B cell (primary cell): ENCODE measurements at regions of chr19 and their contacts with region 1.

Region 1: GRCh38 chr19:10565567-10566407 is at the start of gene KRI1:
- DNase-seq: peak; percentile 100
- ATAC-seq: peak; percentile 63
- H3K4me3 ChIP-seq: peak within 1 kb of the TSS; percentile 92 to 99 (median 97)
- H3K4me3 Mint-ChIP-seq: peak within 1 kb of the TSS; percentile 95
- H3K27ac ChIP-seq: peak within 1 kb of the TSS; percentile 87 to 88
- H3K27ac Mint-ChIP-seq: peak within 1 kb of the TSS; percentile 96
- H3K4me1 ChIP-seq: peaks cover 28 to 41% of the 10 kb centered on the region in 2 donors
- H3K4me1 Mint-ChIP-seq: peaks cover 44% of the 10 kb centered on the region
- H3K27me3 ChIP-seq: no peaks in the 10 kb centered on the region
- H3K27me3 Mint-ChIP-seq: no peaks in the 10 kb centered on the region
- CTCF ChIP-seq: peak; percentile 51
- total RNA-seq, gene KRI1: 62.8 and 67.9 TPM in 2 replicates

Region 2: GRCh38 chr19:10416380-10417257 is 149.2 kb before region 1 on chr19:
- CTCF ChIA-PET with region 1: no interaction called
- POLR2A ChIA-PET with region 1: interaction called, 3 read pairs
- intact Hi-C with region 1: loop called (anchors 5 kb)
- DNase-seq: peak; percentile 99
- ATAC-seq: peak; percentile 70
- H3K4me3 ChIP-seq: peak overlapping the region; percentile 15 to 69 (median 49)
- H3K4me3 Mint-ChIP-seq: peak overlapping the region; percentile 85
- H3K27ac ChIP-seq: peak overlapping the region in 1 of 2 donors; percentile 28
- H3K27ac Mint-ChIP-seq: peak overlapping the region; percentile 94
- H3K4me1 ChIP-seq: peaks cover 66 to 82% of the 10 kb centered on the region in 2 donors
- H3K4me1 Mint-ChIP-seq: peaks cover 59% of the 10 kb centered on the region
- H3K27me3 ChIP-seq: peaks cover 0 to 46% (median 28%) of the 10 kb centered on the region in 4 experiments
- H3K27me3 Mint-ChIP-seq: peaks cover 29% of the 10 kb centered on the region
- CTCF ChIP-seq: peak; percentile 100

Region 3: DNA sequence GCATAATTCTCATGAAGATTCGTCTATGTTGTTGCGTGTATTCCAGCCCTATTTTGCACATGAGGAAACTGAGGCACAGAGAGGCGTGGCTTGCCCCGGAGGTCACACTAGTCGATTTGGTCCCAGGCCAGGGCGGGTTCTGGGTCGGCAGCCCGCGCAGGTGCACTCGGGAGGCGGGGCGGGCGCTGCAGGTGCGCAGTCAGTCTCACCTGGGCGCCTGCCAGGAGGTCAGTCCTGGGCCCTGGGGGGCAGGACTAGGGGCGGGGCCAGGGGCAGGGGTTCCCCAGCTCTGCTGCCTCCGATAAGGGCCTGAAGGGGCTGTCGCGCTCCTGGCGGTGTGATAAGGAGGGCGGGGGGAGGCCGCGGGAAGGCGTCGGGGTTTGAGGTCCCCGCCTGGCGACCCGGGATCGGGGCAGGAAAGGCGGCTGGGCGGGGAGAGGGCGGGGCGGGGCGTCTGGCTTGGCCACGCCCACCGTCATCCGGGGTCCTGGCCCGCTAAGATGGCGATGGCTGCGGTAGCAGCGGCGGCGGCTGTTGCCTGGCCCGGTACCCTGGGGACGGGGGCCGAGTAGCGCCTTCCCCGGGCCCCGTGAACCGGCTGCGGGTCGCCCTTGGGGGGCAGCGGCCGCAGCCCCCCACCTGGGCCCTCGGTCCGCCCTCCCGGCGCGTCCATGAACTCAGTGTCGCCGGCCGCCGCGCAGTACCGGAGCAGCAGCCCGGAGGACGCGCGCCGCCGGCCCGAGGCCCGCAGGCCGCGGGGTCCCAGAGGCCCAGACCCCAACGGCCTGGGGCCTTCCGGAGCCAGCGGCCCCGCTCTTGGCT is 22.2 kb before region 1 on chr19 and contains the start of gene ATG4D:
- CTCF ChIA-PET with region 1: interaction called, 73 read pairs
- POLR2A ChIA-PET with region 1: interaction called, 15 read pairs
- intact Hi-C with region 1: loop called (anchors 1 kb)
- DNase-seq: peak; percentile 88
- ATAC-seq: peak; percentile 82
- H3K4me3 ChIP-seq: peak within 1 kb of the TSS; percentile 27 to 88 (median 75)
- H3K4me3 Mint-ChIP-seq: peak within 1 kb of the TSS; percentile 89
- H3K27ac ChIP-seq: peak within 1 kb of the TSS; percentile 34 to 85
- H3K27ac Mint-ChIP-seq: peak within 1 kb of the TSS; percentile 87
- H3K4me1 ChIP-seq: peaks cover 12 to 19% of the 10 kb centered on the region in 2 donors
- H3K4me1 Mint-ChIP-seq: peaks cover 16% of the 10 kb centered on the region
- H3K27me3 ChIP-seq: peaks cover 0 to 5% (median 0%) of the 10 kb centered on the region in 4 experiments
- H3K27me3 Mint-ChIP-seq: peaks cover 6% of the 10 kb centered on the region
- CTCF ChIP-seq: no peak
- total RNA-seq, gene ATG4D: 58.8 and 59.2 TPM in 2 replicates

Region 4: GRCh38 chr19:10580979-10581631 is 15.3 kb after region 1 on chr19:
- CTCF ChIA-PET with region 1: interaction called, 23 read pairs
- POLR2A ChIA-PET with region 1: interaction called, 3 read pairs
- intact Hi-C with region 1: no loop called
- DNase-seq: peak; percentile 93
- ATAC-seq: peak; percentile 99
- H3K4me3 ChIP-seq: peak overlapping the region in 1 of 5 experiments; percentile 2
- H3K4me3 Mint-ChIP-seq: peak overlapping the region; percentile 30
- H3K27ac ChIP-seq: no peak overlapping the region
- H3K27ac Mint-ChIP-seq: peak overlapping the region; percentile 16
- H3K4me1 ChIP-seq: peaks cover 4 to 8% of the 10 kb centered on the region in 2 donors
- H3K4me1 Mint-ChIP-seq: peaks cover 16% of the 10 kb centered on the region
- H3K27me3 ChIP-seq: no peaks in the 10 kb centered on the region
- H3K27me3 Mint-ChIP-seq: no peaks in the 10 kb centered on the region
- CTCF ChIP-seq: peak; percentile 98

Region 5: DNA sequence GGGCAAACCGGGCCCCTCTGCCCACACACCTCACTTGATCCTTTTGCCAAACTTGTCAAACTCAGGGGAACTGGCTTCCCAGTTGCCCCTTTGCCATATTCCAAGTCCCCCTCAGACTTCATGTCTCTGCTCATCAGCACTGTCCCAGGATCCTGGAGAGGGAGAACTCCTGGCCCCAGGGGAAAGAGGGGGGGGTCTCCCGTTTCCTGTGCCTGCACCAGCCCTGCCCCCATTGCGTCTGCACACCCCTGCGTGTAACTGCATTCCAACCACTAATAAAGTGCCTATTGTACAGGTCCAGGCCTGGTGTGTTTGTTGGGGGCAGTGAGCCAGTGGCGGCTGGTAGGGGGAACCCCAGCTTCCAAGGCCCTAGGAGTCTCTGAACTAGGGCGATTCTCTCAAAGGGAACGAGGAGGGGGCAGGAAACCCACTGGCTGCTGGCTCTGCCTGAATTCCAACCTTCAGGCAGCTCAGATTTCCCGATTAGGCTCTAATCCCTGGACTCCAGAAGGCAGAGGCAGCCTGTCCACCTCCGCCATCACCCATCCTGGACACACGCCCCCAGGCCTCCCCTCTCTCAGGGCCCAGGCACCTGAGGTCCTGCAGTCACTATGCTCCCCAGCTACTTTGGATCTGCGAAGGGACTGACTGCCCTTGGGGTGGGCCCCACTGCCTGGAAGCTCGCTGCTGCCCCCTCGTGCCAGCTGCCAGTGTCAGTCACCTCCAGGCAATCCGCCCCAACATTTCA is 78.6 kb after region 1 on chr19:
- CTCF ChIA-PET with region 1: interaction called, 102 read pairs
- POLR2A ChIA-PET with region 1: interaction called, 6 read pairs
- intact Hi-C with region 1: no loop called
- DNase-seq: peak; percentile 87
- ATAC-seq: peak; percentile 79
- H3K4me3 ChIP-seq: no peak overlapping the region
- H3K4me3 Mint-ChIP-seq: no peak overlapping the region
- H3K27ac ChIP-seq: peak overlapping the region; percentile 30 to 69
- H3K27ac Mint-ChIP-seq: peak overlapping the region; percentile 86
- H3K4me1 ChIP-seq: peaks cover 7 to 16% of the 10 kb centered on the region in 2 donors
- H3K4me1 Mint-ChIP-seq: peaks cover 26% of the 10 kb centered on the region
- H3K27me3 ChIP-seq: no peaks in the 10 kb centered on the region
- H3K27me3 Mint-ChIP-seq: no peaks in the 10 kb centered on the region
- CTCF ChIP-seq: peak; percentile 90

Region 6: DNA sequence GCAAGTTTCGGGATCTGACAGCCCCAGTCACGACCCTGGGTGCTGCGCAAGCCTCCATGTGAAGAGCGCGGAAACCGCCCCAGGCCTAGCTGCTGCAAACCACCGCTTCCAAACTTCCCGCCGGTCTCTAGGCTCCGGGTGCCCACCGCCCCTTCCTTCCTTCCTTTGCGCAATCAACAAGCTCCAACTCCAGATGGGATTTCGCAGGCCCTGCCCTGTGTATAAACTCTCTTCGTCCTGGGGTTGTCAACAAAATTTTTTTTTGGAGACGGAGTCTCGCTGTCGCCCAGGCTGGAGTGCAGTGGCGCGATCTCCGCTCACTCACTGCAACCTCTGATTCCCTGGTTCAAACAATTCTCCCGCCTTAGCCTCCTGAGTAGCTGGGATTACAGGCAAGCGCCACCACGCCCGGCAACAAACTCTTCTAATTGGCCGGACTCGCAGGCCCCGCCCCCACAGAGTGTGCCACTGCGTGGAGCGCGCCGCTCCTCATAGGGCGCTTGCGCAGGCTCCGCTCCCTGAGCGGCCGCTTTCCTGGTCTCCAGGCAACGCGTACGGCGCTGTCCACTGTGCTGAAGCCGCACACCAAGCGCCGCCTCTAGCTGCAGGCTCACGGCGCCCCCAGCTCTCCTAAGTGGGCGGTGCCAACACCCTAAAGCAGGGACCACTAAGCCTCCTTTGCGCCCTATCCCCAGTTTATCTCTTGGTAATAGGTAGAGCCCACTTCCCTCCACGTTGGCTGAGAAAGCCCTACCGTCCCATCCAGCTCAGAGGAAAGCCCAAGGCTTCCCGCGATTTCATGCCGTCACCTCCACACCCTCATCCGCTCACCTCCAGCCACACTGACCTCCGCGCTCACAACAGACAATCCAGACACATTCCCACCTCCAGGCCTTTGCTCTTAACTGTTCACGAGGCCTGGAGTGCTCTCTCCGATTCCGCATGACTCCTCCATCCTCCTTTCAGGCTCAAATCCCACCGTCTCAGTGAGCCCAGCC is 129.9 kb after region 1 on chr19:
- CTCF ChIA-PET with region 1: no interaction called
- POLR2A ChIA-PET with region 1: no interaction called
- intact Hi-C with region 1: loop called (anchors 5 kb)
- DNase-seq: peak; percentile 90
- ATAC-seq: peak; percentile 98
- H3K4me3 ChIP-seq: peak overlapping the region; percentile 6 to 54 (median 25)
- H3K4me3 Mint-ChIP-seq: peak overlapping the region; percentile 80
- H3K27ac ChIP-seq: no peak overlapping the region
- H3K27ac Mint-ChIP-seq: peak overlapping the region; percentile 67
- H3K4me1 ChIP-seq: peaks cover 10 to 15% of the 10 kb centered on the region in 2 donors
- H3K4me1 Mint-ChIP-seq: peaks cover 17% of the 10 kb centered on the region
- H3K27me3 ChIP-seq: no peaks in the 10 kb centered on the region
- H3K27me3 Mint-ChIP-seq: no peaks in the 10 kb centered on the region
- CTCF ChIP-seq: no peak

Region 7: DNA sequence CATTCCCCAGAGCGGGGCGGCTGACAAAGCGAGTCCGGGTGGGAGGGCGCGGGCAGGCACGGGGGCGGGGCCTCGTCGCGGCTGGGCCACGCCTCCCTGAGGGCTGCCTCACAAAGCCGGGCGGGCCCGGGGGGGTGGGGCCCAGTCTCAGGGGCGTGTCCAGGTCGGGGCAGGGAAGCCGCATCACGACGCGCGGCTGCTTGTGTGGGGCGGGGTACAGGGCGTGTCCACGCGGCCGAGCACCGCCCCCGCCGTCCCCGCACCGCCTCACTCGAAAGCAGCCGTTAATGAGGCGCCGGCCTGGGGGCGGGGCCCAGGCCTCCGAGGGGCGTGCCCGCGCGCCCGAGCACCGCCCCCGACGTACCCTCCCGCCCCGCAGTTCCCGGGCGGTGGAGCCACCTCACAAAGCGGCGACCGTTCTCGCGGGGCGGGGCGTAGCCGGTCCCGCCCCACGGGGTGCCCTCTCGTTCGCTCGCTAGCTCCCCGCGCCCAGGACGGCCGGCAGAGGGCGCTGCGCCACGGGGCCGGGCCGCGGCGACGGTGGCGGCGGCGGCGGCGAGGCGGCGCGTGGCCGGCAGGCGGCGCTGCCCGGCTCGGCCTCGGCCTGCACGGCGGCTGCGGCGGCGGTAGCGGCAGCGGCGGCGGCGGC is 305.3 kb after region 1 on chr19 and contains the start of gene CARM1:
- CTCF ChIA-PET with region 1: no interaction called
- POLR2A ChIA-PET with region 1: interaction called, 3 read pairs
- intact Hi-C with region 1: loop called (anchors 1 kb)
- DNase-seq: peak; percentile 99
- ATAC-seq: peak; percentile 83
- H3K4me3 ChIP-seq: peak within 1 kb of the TSS; percentile 41 to 79 (median 67)
- H3K4me3 Mint-ChIP-seq: peak within 1 kb of the TSS; percentile 86
- H3K27ac ChIP-seq: peak within 1 kb of the TSS; percentile 75 to 79
- H3K27ac Mint-ChIP-seq: peak within 1 kb of the TSS; percentile 85
- H3K4me1 ChIP-seq: peaks cover 33 to 46% of the 10 kb centered on the region in 2 donors
- H3K4me1 Mint-ChIP-seq: peaks cover 43% of the 10 kb centered on the region
- H3K27me3 ChIP-seq: no peaks in the 10 kb centered on the region
- H3K27me3 Mint-ChIP-seq: no peaks in the 10 kb centered on the region
- CTCF ChIP-seq: peak; percentile 55
- total RNA-seq, gene CARM1: 29.4 and 33.0 TPM in 2 replicates

Region 8: DNA sequence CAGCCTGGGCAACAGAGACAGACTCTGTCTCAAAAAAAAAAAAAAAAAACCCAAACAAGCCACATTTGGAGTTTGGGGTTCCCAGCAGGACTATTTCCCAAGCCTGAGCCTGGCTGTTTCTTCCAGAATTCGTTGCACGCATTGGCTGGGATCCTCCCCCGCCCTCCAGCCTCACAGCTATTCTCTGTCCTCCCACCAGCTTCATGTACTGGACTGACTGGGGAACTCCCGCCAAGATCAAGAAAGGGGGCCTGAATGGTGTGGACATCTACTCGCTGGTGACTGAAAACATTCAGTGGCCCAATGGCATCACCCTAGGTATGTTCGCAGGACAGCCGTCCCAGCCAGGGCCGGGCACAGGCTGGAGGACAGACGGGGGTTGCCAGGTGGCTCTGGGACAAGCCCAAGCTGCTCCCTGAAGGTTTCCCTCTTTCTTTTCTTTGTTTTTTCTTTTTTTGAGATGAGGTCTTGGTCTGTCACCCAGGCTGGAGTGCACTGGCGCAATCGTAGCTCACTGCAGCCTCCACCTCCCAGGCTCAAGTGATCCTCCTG is 550.2 kb after region 1 on chr19:
- CTCF ChIA-PET with region 1: no interaction called
- POLR2A ChIA-PET with region 1: no interaction called
- intact Hi-C with region 1: no loop called
- DNase-seq: no peak
- ATAC-seq: no peak
- H3K4me3 ChIP-seq: no peak overlapping the region
- H3K4me3 Mint-ChIP-seq: no peak overlapping the region
- H3K27ac ChIP-seq: no peak overlapping the region
- H3K27ac Mint-ChIP-seq: no peak overlapping the region
- H3K4me1 ChIP-seq: no peaks in the 10 kb centered on the region
- H3K4me1 Mint-ChIP-seq: no peaks in the 10 kb centered on the region
- H3K27me3 ChIP-seq: peaks cover 0 to 4% (median 0%) of the 10 kb centered on the region in 4 experiments
- H3K27me3 Mint-ChIP-seq: no peaks in the 10 kb centered on the region
- CTCF ChIP-seq: no peak